Posterior vena cava (tissue), 2 donors: ENCODE measurements at regions of chr16 and their contacts with region 1.

Region 1: GRCh38 chr16:63850979-63851378 is 1270.9 kb downstream of the CDH11 start:
- DNase-seq: no peak

Region 2: DNA sequence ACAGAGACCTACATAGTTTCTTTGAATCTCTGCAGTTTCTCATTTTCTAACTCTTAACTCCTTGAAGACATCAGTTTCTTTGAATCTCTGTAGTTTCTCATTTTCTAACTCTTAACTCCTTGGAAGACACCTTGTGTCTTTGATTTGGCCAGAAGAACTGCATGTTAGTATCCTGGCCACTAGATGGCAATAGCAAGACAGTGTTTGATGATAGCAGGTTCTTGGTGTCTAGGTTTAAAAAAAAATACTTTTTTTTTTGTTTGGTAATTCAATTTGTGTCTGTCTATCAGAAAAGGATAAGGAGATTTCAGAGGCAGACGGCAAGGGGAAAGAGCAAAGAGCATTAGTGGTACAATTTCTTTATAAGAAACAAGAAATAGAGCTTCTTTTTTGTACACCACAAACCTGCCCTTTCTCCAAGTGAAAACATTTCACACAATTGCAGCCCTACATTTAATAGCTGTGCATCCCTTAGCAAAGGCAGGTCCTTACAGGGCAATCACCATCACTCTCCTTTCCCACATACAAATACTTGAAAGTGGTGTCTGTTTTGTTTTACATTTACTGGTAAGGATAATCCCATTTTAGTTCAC is 489.9 kb before region 1 on chr16:
- intact Hi-C with region 1: loop called in 1 of 2 experiments (anchors 5 kb)
- DNase-seq: no peak

Region 3: GRCh38 chr16:63876103-63876502 is 25.1 kb after region 1 on chr16:
- intact Hi-C with region 1: no loop called
- DNase-seq: no peak